Sigmoid colon (tissue), 7 donors: ENCODE measurements at regions of chr1 and their contacts with region 1.

Region 1: GRCh38 chr1:245621589-245621988 is 466.8 kb downstream of the KIF26B start:
- DNase-seq: no peak
- H3K4me3 ChIP-seq: no peak overlapping the region
- H3K27ac ChIP-seq: no peak overlapping the region
- H3K4me1 ChIP-seq: no peaks in the 10 kb centered on the region
- H3K27me3 ChIP-seq: peaks cover 0 to 6% (median 0%) of the 10 kb centered on the region in 3 donors
- CTCF ChIP-seq: no peak
- EP300 ChIP-seq: no peak
- POLR2A ChIP-seq: no peak

Region 2: DNA sequence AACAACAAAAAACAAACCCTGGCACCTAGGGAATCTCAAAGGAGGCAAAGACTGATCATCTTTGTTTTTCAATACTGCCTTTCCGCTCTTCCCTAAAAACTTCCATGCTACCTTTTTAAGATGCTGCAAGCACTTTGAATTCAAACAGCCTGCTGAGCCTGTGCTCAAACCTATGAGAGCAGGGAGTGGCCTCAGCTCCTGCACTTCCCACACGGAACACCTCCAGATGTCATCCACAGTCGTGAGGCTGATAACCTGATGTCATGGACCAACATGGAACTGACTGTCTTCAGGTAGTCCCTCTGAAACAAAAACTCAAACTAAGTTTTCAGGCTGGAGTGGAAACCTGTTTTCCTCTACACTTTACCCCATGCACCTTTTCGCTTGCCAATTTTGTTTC is 921.8 kb before region 1 on chr1:
- intact Hi-C with region 1: loop called (anchors 10 kb)
- DNase-seq: no peak
- H3K4me3 ChIP-seq: no peak overlapping the region
- H3K27ac ChIP-seq: no peak overlapping the region
- H3K4me1 ChIP-seq: no peaks in the 10 kb centered on the region
- H3K27me3 ChIP-seq: no peaks in the 10 kb centered on the region
- CTCF ChIP-seq: no peak
- EP300 ChIP-seq: no peak
- POLR2A ChIP-seq: no peak

Region 3: GRCh38 chr1:245041058-245041698 is 580.4 kb before region 1 on chr1:
- intact Hi-C with region 1: no loop called
- DNase-seq: no peak
- H3K4me3 ChIP-seq: no peak overlapping the region
- H3K27ac ChIP-seq: no peak overlapping the region
- H3K4me1 ChIP-seq: peaks cover 0 to 7% (median 0%) of the 10 kb centered on the region in 4 donors
- H3K27me3 ChIP-seq: no peaks in the 10 kb centered on the region
- CTCF ChIP-seq: no peak
- EP300 ChIP-seq: no peak
- POLR2A ChIP-seq: no peak